ENCODE measurements at regions of chr5 and their contacts with region 1.

Region 1: DNA sequence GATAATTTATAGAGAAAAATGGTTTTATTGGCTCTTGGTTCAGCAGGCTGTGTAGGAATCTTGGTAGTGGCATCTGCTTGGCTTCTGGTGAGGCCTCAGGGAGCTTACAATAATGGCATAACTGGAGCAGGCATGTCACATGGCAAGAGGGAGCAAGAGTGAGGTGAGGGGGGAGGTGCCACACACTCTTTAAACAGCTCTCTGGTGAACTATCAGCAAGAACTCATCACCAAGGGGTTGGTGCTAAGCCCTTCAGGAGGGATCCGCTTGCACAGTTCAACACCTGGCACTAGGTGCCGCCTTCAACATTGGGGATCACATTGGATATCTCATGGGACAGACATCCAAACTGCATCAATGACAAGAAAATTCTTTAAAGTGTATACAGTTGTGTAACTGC is 10.5 kb downstream of the GPBP1 start:
- DNase-seq: no peak
- ATAC-seq: no peak
- H3K4me3 ChIP-seq: no peak overlapping the region
- H3K4me3 Mint-ChIP-seq: peak overlapping the region; percentile 41 to 86 (median 67)
- H3K27ac ChIP-seq: no peak overlapping the region
- H3K27ac Mint-ChIP-seq: peak overlapping the region in 7 of 9 donors; percentile 15 to 86 (median 52)
- H3K4me1 ChIP-seq: peaks cover 61 to 71% of the 10 kb centered on the region in 2 donors
- H3K4me1 Mint-ChIP-seq: peaks cover 62 to 95% (median 80%) of the 10 kb centered on the region in 7 donors
- H3K27me3 ChIP-seq: no peaks in the 10 kb centered on the region
- H3K27me3 Mint-ChIP-seq: no peaks in the 10 kb centered on the region

Region 2: GRCh38 chr5:57199866-57200265 is 15.5 kb after region 1 on chr5:
- CTCF ChIA-PET with region 1: interaction called, 3 read pairs
- POLR2A ChIA-PET with region 1: no interaction called
- intact Hi-C with region 1: loop called in 1 of 2 experiments (anchors 1 kb)
- DNase-seq: no peak
- ATAC-seq: peak; percentile 60
- H3K4me3 ChIP-seq: no peak overlapping the region
- H3K4me3 Mint-ChIP-seq: peak overlapping the region; percentile 3 to 77 (median 63)
- H3K27ac ChIP-seq: peak overlapping the region; percentile 33
- H3K27ac Mint-ChIP-seq: peak overlapping the region in 8 of 9 donors; percentile 34 to 89 (median 70)
- H3K4me1 ChIP-seq: peaks cover 22 to 46% of the 10 kb centered on the region in 2 donors
- H3K4me1 Mint-ChIP-seq: peaks cover 42 to 89% (median 80%) of the 10 kb centered on the region in 7 donors
- H3K27me3 ChIP-seq: no peaks in the 10 kb centered on the region
- H3K27me3 Mint-ChIP-seq: no peaks in the 10 kb centered on the region

Region 3: DNA sequence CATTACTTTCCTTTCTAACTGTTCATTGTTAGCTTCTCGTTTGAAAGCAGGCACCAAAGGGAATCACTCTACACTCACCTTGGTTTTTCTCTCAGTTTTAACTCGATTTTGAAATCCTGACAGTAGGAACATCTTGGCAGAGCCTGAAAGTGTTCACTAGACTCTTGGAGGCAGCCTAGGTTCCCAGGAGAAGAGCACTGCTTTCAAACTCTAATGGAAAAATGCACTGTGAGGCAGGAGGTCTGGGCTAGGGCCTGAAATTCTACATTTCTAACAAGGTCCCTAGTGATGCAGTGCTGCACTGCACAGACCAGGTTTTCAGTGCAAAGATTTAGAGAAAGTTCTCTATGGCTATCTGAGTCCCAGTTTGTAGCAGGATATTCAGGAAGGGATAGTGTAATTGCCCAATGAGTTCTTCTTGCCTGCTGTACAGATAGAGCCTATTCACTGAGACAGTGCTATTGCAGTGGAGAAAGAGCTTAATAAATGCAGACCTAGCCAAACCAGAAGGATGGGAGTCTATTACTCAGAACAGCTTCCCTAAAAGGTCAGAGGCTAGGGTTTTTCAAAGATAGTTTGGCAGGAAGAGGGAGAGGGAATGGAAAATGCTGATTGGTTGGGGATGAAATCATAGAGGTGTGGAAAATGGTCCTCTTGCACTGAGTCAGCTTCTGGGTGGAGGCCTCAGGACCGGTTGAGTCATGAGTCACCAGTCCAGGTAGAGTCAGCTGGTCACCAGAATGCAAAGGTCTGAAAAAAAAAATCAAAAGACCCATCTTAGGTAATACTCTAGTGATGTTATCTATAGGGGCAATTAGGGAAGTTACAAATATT is 143.5 kb after region 1 on chr5:
- CTCF ChIA-PET with region 1: no interaction called
- POLR2A ChIA-PET with region 1: no interaction called
- intact Hi-C with region 1: no loop called
- DNase-seq: no peak
- ATAC-seq: no peak
- H3K4me3 ChIP-seq: no peak overlapping the region
- H3K4me3 Mint-ChIP-seq: no peak overlapping the region
- H3K27ac ChIP-seq: no peak overlapping the region
- H3K27ac Mint-ChIP-seq: peak overlapping the region in 1 of 9 donors; percentile 18
- H3K4me1 ChIP-seq: peaks cover 0 to 4% of the 10 kb centered on the region in 2 donors
- H3K4me1 Mint-ChIP-seq: peaks cover 0 to 12% (median 9%) of the 10 kb centered on the region in 7 donors
- H3K27me3 ChIP-seq: no peaks in the 10 kb centered on the region
- H3K27me3 Mint-ChIP-seq: peaks cover 0 to 10% (median 0%) of the 10 kb centered on the region in 5 donors